ENCODE measurements at regions of chr2 and their contacts with region 1.

Region 1: DNA sequence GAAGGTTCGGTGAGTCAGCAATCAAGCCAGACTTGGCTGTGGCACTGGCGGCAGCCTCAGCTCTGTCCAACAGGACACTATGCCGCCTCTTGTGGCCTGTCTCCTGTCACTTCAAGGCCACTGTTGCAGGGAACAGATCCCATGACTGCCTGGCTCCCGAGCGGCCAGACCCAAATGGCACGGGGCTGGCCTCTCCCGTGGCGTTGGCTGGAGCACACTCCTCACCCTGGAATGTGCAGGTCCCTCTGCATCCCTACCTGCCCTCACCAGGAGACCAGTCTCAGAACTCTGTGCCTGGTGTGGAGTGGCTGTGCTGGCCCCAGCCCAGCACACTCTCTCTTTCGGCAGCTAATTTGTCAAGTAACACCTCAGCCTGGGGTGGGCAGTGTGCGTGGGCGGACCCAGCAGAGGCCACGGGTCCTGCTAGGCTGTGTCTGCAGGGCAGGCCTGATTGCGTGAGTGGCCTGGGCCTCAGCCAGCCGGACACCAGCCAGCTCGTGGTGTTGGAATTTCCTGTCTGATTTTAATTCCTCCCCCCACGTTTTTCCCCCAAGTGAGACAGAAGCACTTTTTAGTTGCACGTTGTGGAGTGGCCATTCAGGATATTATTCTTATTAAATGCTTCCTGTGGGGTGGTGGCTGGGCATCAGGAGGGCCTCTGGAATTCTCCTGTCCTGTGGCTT is 179.3 kb downstream of the GLI2 start:
- DNase-seq: peak; percentile 92 to 97
- ATAC-seq: peak; percentile 70
- H3K4me3 ChIP-seq: no peak overlapping the region
- H3K27ac ChIP-seq: peak overlapping the region; percentile 46 to 87
- H3K4me1 ChIP-seq: peaks cover 0 to 11% of the 10 kb centered on the region in 2 donors
- H3K27me3 ChIP-seq: no peaks in the 10 kb centered on the region

Region 2: DNA sequence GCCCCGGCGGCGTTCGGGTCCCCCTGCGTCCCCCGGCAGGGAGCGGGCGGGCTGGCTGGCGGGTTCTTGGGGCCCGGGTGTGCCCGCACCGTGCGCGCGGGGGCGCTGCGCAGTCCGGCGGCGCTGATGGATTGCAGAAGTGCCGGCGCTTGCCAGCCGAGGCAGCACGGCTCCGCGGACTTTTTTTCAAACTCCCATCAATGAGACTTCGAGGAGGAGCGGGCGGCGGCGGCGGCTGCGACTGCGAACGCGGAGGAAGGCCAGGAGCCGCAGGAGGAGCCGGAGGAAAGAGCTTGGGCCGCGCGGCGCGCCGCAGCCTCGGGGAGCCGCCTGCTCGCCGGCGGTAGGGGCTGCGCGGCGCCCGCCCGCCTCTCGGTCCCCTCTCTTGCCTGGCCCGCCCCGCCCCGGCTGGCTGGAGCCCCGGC is 179.2 kb before region 1 on chr2 and contains the start of gene GLI2:
- intact Hi-C with region 1: loop called in 1 of 2 experiments (anchors 10 kb)
- DNase-seq: peak; percentile 82 to 93
- ATAC-seq: peak; percentile 86
- H3K4me3 ChIP-seq: peak within 1 kb of the TSS; percentile 29 to 46
- H3K27ac ChIP-seq: peak within 1 kb of the TSS in 1 of 2 donors; percentile 16
- H3K4me1 ChIP-seq: no peaks in the 10 kb centered on the region
- H3K27me3 ChIP-seq: no peaks in the 10 kb centered on the region
- total RNA-seq, gene GLI2: 9.0 to 18.5 TPM

Region 3: DNA sequence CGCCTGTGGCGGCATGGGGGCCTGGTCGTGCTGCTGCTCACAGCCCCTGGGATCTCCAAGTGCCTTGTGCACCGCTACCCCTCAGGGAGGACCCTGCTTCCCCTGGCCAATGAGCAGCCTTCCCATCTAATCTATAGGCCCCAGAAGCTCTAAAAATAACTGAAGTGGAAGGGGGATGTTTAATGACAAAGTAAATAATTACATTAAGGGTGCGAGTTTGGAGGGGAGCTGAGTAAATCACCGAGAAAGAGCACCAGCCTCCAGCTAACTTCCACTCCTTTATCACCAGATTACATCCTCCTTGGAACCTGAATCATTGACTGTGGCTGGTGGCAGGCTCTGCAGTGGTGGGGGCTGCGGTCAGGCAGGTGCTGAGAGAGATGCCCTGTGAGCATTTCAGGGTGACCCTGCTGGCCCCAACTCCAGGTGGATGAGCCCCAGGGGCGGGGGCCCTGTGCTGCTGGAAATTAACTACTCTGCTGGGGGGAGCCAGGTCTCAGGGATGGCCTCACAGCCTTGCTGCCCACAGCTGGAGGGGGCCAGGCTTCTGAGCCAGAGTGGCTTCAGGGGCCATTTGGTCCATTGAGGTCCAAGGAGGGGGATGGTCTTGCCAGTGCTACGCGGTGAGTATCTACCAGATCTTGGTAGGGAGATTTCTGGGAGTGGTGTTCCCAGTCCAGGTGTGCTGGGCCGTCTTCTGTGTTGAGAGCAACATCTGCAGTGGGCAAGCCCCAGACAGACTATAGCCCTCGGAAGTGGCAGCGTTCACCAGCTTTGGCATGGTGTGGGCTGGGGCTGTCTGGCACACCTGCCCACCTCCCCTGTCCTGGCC is 105.2 kb before region 1 on chr2:
- intact Hi-C with region 1: loop called in 1 of 2 experiments (anchors 5 kb)
- DNase-seq: no peak
- ATAC-seq: no peak
- H3K4me3 ChIP-seq: no peak overlapping the region
- H3K27ac ChIP-seq: no peak overlapping the region
- H3K4me1 ChIP-seq: peaks cover 0 to 4% of the 10 kb centered on the region in 2 donors
- H3K27me3 ChIP-seq: no peaks in the 10 kb centered on the region

Region 4: DNA sequence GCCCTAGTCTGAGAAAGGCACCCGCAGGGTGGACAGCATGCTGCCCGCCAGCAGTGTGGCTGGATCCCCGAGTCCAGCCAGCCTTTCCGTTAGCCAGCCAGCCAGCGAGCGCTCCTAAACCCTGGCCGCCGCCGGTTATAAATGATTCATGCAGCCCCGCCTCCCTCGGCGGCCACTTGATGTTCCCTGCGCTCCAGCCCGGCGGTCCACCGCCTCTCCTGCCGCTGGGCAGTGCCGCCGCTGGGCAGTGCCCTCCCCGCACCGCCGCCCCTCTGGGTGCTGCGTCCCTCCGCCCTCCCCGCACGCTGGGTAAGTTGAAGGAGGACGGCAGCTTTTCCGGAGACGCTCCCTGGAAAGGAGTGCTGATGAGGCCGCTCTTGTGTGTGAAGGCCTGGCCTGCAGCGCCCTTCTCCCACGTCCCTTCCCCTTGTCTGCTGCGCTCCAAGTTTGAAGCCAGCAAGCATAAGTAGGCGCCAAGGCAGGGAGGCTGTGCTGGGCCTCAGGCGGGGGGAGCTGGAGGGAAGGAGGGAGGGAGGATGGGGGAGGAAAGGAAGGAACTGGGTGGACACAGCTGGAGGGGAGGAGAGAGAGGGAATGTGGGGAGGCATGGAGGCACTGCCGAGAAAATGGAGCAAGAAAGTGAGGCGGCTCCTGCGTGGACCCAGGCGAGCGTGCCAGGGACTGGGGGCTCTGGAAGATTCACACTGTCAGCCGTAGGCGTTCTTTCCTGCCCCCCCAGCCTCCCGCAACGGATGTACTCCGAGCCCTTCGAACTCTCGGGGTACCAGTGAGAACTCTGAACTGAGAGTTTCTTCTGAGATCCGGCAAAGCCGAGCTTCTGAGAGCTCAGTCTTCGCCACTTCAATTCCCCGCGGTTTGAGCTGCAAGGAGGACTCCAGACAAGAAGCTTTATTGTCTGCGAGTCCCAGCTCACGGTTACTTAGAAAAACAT is 47.4 kb before region 1 on chr2:
- intact Hi-C with region 1: loop called (anchors 5 kb)
- DNase-seq: peak; percentile 91 to 95
- ATAC-seq: peak; percentile 92
- H3K4me3 ChIP-seq: peak overlapping the region; percentile 29 to 39
- H3K27ac ChIP-seq: peak overlapping the region; percentile 70 to 82
- H3K4me1 ChIP-seq: no peaks in the 10 kb centered on the region
- H3K27me3 ChIP-seq: no peaks in the 10 kb centered on the region

Region 5: GRCh38 chr2:120939595-120940318 is 24.8 kb after region 1 on chr2:
- intact Hi-C with region 1: loop called in 1 of 2 experiments (anchors 2 kb)
- DNase-seq: no peak
- ATAC-seq: no peak
- H3K4me3 ChIP-seq: no peak overlapping the region
- H3K27ac ChIP-seq: no peak overlapping the region
- H3K4me1 ChIP-seq: peaks cover 0 to 2% of the 10 kb centered on the region in 2 donors
- H3K27me3 ChIP-seq: no peaks in the 10 kb centered on the region